Esophagus muscularis mucosa (tissue), 4 donors: ENCODE measurements at regions of chr16 and their contacts with region 1.

Region 1: DNA sequence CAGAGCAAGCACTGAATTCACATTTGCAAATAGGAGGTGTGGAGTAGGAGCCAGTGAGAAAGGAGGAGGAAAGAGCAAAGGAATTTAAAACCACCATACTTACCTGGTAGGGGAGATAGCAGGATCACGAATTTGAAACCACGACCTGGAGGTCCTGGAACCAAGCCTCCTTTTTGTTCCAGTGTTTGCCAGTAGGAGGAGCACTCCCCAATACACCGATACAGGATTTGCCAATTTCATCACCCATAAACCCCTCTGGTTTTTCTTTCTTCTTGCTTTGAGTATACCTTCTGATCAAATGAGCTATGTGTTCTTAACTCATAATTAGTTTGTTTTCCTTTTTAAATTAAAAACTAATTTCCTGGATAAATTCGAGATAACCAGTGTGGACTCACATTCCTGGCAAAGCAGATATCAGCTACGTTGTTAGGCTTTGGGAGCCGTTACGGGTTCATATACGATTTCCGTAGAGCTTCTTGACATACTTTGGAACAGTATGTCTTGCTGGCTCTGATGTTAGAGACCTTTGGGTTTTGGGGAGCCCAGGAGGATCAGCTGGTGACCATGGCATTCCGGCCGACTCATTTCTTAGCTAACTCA is 22.7 kb downstream of the BCO1 start:
- DNase-seq: no peak
- H3K4me3 ChIP-seq: no peak overlapping the region
- H3K27ac ChIP-seq: no peak overlapping the region
- H3K4me1 ChIP-seq: peaks cover 15 to 29% (median 22%) of the 10 kb centered on the region in 4 donors
- H3K27me3 ChIP-seq: no peaks in the 10 kb centered on the region
- CTCF ChIP-seq: peak in 2 of 3 experiments; percentile 30 to 66
- EP300 ChIP-seq: no peak
- POLR2A ChIP-seq: no peak

Region 2: GRCh38 chr16:81053761-81054160 is 207.4 kb before region 1 on chr16:
- intact Hi-C with region 1: no loop called
- DNase-seq: no peak
- H3K4me3 ChIP-seq: no peak overlapping the region
- H3K27ac ChIP-seq: no peak overlapping the region
- H3K4me1 ChIP-seq: no peaks in the 10 kb centered on the region
- H3K27me3 ChIP-seq: no peaks in the 10 kb centered on the region
- CTCF ChIP-seq: no peak
- EP300 ChIP-seq: no peak
- POLR2A ChIP-seq: no peak

Region 3: DNA sequence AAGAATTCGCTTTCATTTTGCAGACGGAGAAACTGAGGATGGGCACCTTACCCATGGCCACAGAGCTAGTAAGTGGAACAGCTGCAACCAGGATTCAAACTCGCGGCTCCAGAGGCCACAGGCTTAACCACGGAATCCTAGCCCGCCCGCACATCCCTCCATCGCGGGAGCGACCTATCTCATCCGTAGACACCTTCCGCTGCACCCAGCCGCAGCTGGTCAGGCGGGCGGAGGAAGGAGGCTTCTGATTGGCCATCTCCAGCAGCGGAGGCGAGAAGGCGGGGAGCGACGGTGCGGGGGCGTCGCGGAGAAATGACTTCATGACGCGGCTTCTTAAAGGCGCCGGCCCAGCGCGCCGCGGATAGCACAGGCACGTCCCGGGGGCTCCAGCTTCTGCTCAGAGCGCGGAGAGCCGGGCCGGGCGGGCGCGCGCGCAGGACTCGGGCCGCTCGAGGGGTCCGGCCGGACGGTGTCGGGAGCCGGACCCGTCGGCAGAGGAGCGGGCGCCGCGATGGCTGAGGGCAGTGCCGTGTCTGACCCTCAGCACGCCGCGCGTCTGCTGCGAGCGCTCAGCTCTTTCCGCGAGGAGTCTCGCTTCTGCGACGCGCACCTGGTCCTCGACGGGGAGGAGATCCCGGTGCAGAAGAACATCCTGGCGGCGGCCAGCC is 53.6 kb after region 1 on chr16 and contains the start of gene GAN:
- intact Hi-C with region 1: loop called (anchors 5 kb)
- DNase-seq: peak; percentile 99
- H3K4me3 ChIP-seq: peak within 1 kb of the TSS; percentile 88 to 93 (median 90)
- H3K27ac ChIP-seq: peak within 1 kb of the TSS; percentile 91 to 96 (median 94)
- H3K4me1 ChIP-seq: peaks cover 30 to 65% (median 47%) of the 10 kb centered on the region in 4 donors
- H3K27me3 ChIP-seq: no peaks in the 10 kb centered on the region
- CTCF ChIP-seq: no peak
- EP300 ChIP-seq: no peak
- POLR2A ChIP-seq: peak; percentile 73
- total RNA-seq, gene GAN: 9.6 to 14.8 (median 11.7) TPM

Region 4: GRCh38 chr16:81537721-81538561 is 276.8 kb after region 1 on chr16:
- intact Hi-C with region 1: no loop called
- DNase-seq: no peak
- H3K4me3 ChIP-seq: no peak overlapping the region
- H3K27ac ChIP-seq: no peak overlapping the region
- H3K4me1 ChIP-seq: peaks cover 3 to 39% (median 25%) of the 10 kb centered on the region in 4 donors
- H3K27me3 ChIP-seq: no peaks in the 10 kb centered on the region
- CTCF ChIP-seq: no peak
- EP300 ChIP-seq: no peak
- POLR2A ChIP-seq: no peak